ENCODE measurements at regions of chr20 and their contacts with region 1.

Region 1: DNA sequence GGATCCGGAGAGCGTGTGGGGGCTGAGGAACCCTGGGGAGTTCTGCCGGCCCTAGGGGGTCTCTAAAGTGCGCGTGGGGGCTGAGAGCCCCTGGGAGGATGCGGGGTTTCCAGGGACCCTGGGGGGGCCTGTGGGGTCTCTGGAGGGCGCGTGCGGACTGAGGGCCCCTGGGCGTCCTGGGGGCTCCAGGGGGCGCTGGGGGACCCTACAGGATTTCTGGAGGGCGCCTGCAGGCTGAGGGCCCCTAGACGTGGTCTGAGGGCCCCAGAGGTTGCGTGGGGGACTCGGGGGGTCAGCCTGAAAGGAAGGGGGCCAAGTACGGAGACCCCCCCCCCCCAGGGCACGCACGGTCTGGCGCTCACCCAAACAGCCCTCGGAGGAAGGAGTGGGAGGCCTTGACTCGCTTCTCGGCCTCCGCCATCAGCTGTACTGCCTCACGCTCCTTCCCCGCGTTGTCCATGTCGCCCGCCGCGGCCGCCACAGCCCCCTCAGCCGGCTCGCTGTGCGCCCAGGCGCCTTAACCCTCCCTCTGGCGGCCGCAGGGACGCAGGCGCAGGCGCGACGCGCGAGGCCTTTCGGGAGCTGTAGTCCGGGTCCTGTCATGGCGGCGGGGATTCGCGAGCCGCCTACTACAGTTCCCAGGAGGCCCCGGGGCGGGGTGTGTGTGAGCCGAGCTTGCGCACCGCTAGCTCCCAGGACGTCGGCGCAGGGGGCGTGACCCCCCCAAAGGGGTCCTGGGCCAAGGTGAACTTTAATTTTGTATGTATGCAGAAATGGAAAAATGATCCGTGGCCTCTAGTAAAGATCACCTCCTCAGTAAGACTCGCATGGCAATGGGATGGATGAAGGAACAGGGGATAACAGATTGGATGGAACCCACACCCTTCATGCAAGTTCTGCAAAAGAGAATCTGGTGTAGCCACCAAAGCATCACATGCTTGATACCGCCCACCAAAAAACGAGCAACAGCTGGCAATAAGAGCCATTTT is at the start of gene NAPB:
- DNase-seq: peak; percentile 92 to 94
- H3K4me3 ChIP-seq: peak within 1 kb of the TSS; percentile 76 to 97 (median 78)
- H3K27ac ChIP-seq: peak within 1 kb of the TSS; percentile 85 to 89 (median 88)
- H3K4me1 ChIP-seq: peaks cover 0 to 7% of the 10 kb centered on the region in 2 donors
- H3K27me3 ChIP-seq: no peaks in the 10 kb centered on the region
- CTCF ChIP-seq: peak; percentile 20 to 83 (median 48)
- POLR2A ChIP-seq: peak; percentile 77 to 96
- total RNA-seq, gene NAPB: 22.7 to 32.1 (median 26.9) TPM

Region 2: DNA sequence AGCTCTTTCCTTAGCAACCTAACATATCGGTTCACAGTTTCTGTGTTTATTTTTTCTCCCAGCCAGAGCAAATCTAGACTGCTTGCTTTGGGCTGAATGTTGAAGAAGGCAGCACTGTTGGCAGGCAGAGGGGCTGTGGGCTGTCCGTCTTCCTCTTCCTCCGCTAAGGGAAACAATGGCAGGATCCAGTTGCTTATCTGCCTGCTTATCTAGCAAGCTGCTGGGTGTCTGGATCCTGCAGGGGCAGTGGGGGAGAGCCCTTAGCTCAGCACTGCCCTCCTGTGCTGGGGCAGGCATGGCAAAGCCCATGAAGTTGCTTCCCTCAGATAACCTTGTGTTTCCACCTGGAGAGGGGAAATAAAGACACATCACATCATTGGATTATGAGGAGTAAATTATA is 242.4 kb before region 1 on chr20:
- intact Hi-C with region 1: no loop called
- DNase-seq: no peak
- H3K4me3 ChIP-seq: no peak overlapping the region
- H3K27ac ChIP-seq: no peak overlapping the region
- H3K4me1 ChIP-seq: peaks cover 0 to 12% of the 10 kb centered on the region in 2 donors
- H3K27me3 ChIP-seq: no peaks in the 10 kb centered on the region
- CTCF ChIP-seq: peak in 1 of 6 experiments; percentile 6
- POLR2A ChIP-seq: no peak

Region 3: GRCh38 chr20:23361598-23362384 is 59.4 kb before region 1 on chr20 and contains the start of gene GZF1:
- intact Hi-C with region 1: loop called (anchors 5 kb)
- DNase-seq: peak; percentile 98 to 99
- H3K4me3 ChIP-seq: peak within 1 kb of the TSS; percentile 51 to 91 (median 73)
- H3K27ac ChIP-seq: peak within 1 kb of the TSS; percentile 99 to 100 (median 99)
- H3K4me1 ChIP-seq: peaks cover 39% of the 10 kb centered on the region in 2 donors
- H3K27me3 ChIP-seq: no peaks in the 10 kb centered on the region
- CTCF ChIP-seq: peak in 3 of 6 experiments; percentile 11 to 50 (median 13)
- POLR2A ChIP-seq: peak; percentile 93 to 98
- total RNA-seq, gene GZF1: 13.8 to 29.0 (median 15.4) TPM